H1 (cell line): ENCODE measurements at regions of chr2 and their contacts with region 1.

Region 1: GRCh38 chr2:43105586-43106558 is 120.5 kb downstream of the ZFP36L2 start:
- DNase-seq: no peak
- H3K4me3 ChIP-seq: no peak overlapping the region
- H3K27ac ChIP-seq: no peak overlapping the region
- H3K4me1 ChIP-seq: peaks cover 4 to 15% (median 12%) of the 10 kb centered on the region in 4 experiments; a peak in 6 of 7 replicates
- H3K27me3 ChIP-seq: peaks cover 0 to 12% (median 0%) of the 10 kb centered on the region in 4 experiments; a peak in 3 of 7 replicates
- CTCF ChIP-seq: peak in 2 of 3 experiments; percentile 29 to 32; a peak in 3 of 4 replicates
- EP300 ChIP-seq: no peak
- POLR2A ChIP-seq: no peak
- RAD21 ChIP-seq: peak in 1 of 2 experiments; percentile 31; a peak in 2 of 4 replicates

Region 2: GRCh38 chr2:43083710-43084698 is 21.9 kb before region 1 on chr2:
- CTCF ChIA-PET with region 1: interaction called, 10 read pairs
- POLR2A ChIA-PET with region 1: interaction called, 10 read pairs
- DNase-seq: no peak
- H3K4me3 ChIP-seq: no peak overlapping the region
- H3K27ac ChIP-seq: no peak overlapping the region
- H3K4me1 ChIP-seq: peaks cover 0 to 16% (median 8%) of the 10 kb centered on the region in 4 experiments; a peak in 5 of 7 replicates
- H3K27me3 ChIP-seq: no peaks in the 10 kb centered on the region
- CTCF ChIP-seq: no peak
- EP300 ChIP-seq: no peak
- POLR2A ChIP-seq: no peak
- RAD21 ChIP-seq: no peak

Region 3: GRCh38 chr2:43092520-43093179 is 13.2 kb before region 1 on chr2:
- CTCF ChIA-PET with region 1: interaction called, 10 read pairs
- POLR2A ChIA-PET with region 1: interaction called, 11 read pairs
- DNase-seq: no peak
- H3K4me3 ChIP-seq: no peak overlapping the region
- H3K27ac ChIP-seq: no peak overlapping the region
- H3K4me1 ChIP-seq: no peaks in the 10 kb centered on the region
- H3K27me3 ChIP-seq: no peaks in the 10 kb centered on the region
- CTCF ChIP-seq: no peak
- EP300 ChIP-seq: no peak
- POLR2A ChIP-seq: no peak
- RAD21 ChIP-seq: no peak